ENCODE measurements at regions of chr6 and their contacts with region 1.

Region 1: GRCh38 chr6:70667711-70668498 is at the start of gene SMAP1:
- DNase-seq: peak; percentile 94
- H3K4me3 Mint-ChIP-seq: peak within 1 kb of the TSS; percentile 83
- H3K27ac Mint-ChIP-seq: peak within 1 kb of the TSS; percentile 89
- H3K4me1 Mint-ChIP-seq: peaks cover 52% of the 10 kb centered on the region
- H3K27me3 Mint-ChIP-seq: no peaks in the 10 kb centered on the region
- total RNA-seq, gene SMAP1: 48.4 to 48.6 TPM

Region 2: GRCh38 chr6:70413114-70413991 is 254.6 kb before region 1 on chr6 and contains the start of gene FAM135A:
- CTCF ChIA-PET with region 1: interaction called, 3 read pairs
- POLR2A ChIA-PET with region 1: interaction called, 10 read pairs
- DNase-seq: peak; percentile 96
- H3K4me3 Mint-ChIP-seq: peak within 1 kb of the TSS; percentile 87
- H3K27ac Mint-ChIP-seq: peak within 1 kb of the TSS; percentile 77
- H3K4me1 Mint-ChIP-seq: peaks cover 25% of the 10 kb centered on the region
- H3K27me3 Mint-ChIP-seq: peaks cover 6% of the 10 kb centered on the region
- total RNA-seq, gene FAM135A: 9.2 to 10.0 TPM

Region 3: GRCh38 chr6:70566751-70567382 is 101.0 kb before region 1 on chr6 and contains the start of gene SDHAF4:
- CTCF ChIA-PET with region 1: no interaction called
- POLR2A ChIA-PET with region 1: interaction called, 30 read pairs
- DNase-seq: peak; percentile 94
- H3K4me3 Mint-ChIP-seq: peak within 1 kb of the TSS; percentile 79
- H3K27ac Mint-ChIP-seq: peak within 1 kb of the TSS; percentile 76
- H3K4me1 Mint-ChIP-seq: peaks cover 21% of the 10 kb centered on the region
- H3K27me3 Mint-ChIP-seq: no peaks in the 10 kb centered on the region
- total RNA-seq, gene SDHAF4: 9.8 to 11.6 TPM

Region 4: GRCh38 chr6:70651326-70651905 is 16.5 kb before region 1 on chr6:
- CTCF ChIA-PET with region 1: interaction called, 27 read pairs
- POLR2A ChIA-PET with region 1: interaction called, 63 read pairs
- DNase-seq: peak; percentile 87
- H3K4me3 Mint-ChIP-seq: peak overlapping the region; percentile 47
- H3K27ac Mint-ChIP-seq: peak overlapping the region; percentile 82
- H3K4me1 Mint-ChIP-seq: peaks cover 34% of the 10 kb centered on the region
- H3K27me3 Mint-ChIP-seq: no peaks in the 10 kb centered on the region

Region 5: DNA sequence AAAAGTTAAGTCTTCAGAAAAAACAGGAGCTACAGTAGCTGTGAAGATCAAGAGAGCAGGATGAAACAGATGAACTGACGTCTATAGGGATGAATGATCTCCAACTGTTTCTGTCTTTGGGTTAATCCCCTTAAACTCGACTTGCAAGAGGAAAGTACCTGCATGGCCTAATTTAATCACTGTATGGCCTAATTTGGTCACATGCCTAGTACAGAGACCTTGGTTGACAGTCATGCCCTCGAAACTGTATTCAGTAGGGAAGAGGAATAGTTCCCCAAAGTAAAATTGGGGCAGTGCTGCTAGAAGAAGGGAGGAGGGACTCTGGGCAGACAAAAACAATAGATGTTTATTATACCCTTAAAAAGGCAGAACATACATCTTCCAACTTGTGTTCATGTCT is 10.2 kb before region 1 on chr6:
- CTCF ChIA-PET with region 1: interaction called, 27 read pairs
- POLR2A ChIA-PET with region 1: interaction called, 63 read pairs
- DNase-seq: no peak
- H3K4me3 Mint-ChIP-seq: no peak overlapping the region
- H3K27ac Mint-ChIP-seq: no peak overlapping the region
- H3K4me1 Mint-ChIP-seq: peaks cover under 1% of the 10 kb centered on the region
- H3K27me3 Mint-ChIP-seq: peaks cover 4% of the 10 kb centered on the region

Region 6: GRCh38 chr6:70686548-70687133 is 18.7 kb after region 1 on chr6:
- CTCF ChIA-PET with region 1: interaction called, 12 read pairs
- POLR2A ChIA-PET with region 1: interaction called, 5 read pairs
- DNase-seq: no peak
- H3K4me3 Mint-ChIP-seq: no peak overlapping the region
- H3K27ac Mint-ChIP-seq: no peak overlapping the region
- H3K4me1 Mint-ChIP-seq: peaks cover 31% of the 10 kb centered on the region
- H3K27me3 Mint-ChIP-seq: no peaks in the 10 kb centered on the region

Measured in activated CD4-positive, alpha-beta memory T cell treated with anti-CD3 and anti-CD28 coated beads, Interleukin-2, amount 10 ng/mL, durations not matched to agents 7 days and 5 days (primary cell).